ENCODE measurements at regions of chr5 and their contacts with region 1.

Region 1: GRCh38 chr5:36252722-36253365 is 11.1 kb upstream of the NADK2 start:
- DNase-seq: no peak
- H3K4me3 ChIP-seq: no peak overlapping the region
- H3K27ac ChIP-seq: no peak overlapping the region
- H3K4me1 ChIP-seq: no peaks in the 10 kb centered on the region
- H3K27me3 ChIP-seq: peaks cover 0 to 1% (median 0%) of the 10 kb centered on the region in 4 experiments; a peak in 1 of 7 replicates
- CTCF ChIP-seq: no peak
- EP300 ChIP-seq: no peak
- POLR2A ChIP-seq: no peak
- RAD21 ChIP-seq: no peak

Region 2: DNA sequence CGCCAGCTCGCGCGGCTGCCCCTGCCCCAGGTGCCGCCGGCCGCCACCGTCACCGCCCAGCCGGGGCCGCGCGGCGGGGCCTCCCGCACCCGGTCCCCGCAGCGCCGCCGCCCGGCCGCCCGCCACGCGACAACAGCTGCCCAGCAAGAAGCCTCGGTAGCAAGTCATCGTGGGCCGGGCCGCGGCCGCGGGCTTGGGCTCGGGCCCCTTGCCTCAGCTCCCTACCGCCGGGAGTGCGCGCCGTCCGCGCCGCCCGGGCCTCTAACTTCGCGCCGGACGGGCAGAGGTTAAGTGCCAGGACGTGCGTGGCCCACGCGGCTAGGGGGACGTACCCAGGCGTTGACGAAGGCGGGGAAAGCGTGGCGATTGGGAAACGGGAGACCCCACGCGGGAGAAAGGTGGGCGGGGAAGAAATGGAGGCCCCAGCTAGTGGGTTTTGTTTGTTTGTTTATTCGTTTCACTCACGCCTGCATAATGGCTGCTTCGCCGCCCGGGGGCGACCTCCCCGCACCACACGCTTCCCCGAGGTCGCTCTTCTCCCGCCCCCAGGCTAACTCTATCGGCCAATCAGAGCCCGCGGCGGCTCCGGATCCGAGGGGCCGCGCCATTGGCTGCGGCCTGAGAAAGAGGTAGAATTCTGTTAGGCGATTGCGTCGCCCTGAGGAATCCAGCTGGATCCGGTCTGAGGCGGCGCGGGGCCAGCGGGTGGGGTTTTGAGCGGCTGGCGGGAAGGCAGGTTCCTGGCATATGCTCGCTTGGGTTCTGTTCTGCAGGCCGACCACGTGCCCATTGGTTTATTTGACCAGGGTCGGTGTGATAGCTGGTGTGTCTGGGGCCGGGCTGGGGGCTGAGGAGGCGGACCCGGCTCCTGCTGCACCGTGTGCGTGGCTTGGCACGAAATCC is 11.0 kb before region 1 on chr5 and contains the start of gene NADK2:
- CTCF ChIA-PET with region 1: interaction called, 16 read pairs
- POLR2A ChIA-PET with region 1: interaction called, 5 read pairs
- DNase-seq: peak; percentile 91 to 92
- H3K4me3 ChIP-seq: peak within 1 kb of the TSS; percentile 65 to 91 (median 76)
- H3K27ac ChIP-seq: peak within 1 kb of the TSS; percentile 89; the same call in 1 of the 2 replicates
- H3K4me1 ChIP-seq: peaks cover 3 to 4% (median 3%) of the 10 kb centered on the region in 4 experiments; a peak in 5 of 7 replicates
- H3K27me3 ChIP-seq: peaks cover 1 to 12% (median 6%) of the 10 kb centered on the region in 4 experiments
- CTCF ChIP-seq: peak; percentile 54 to 72 (median 63)
- EP300 ChIP-seq: peak in 1 of 2 experiments; percentile 65; a peak in 1 of 3 replicates
- POLR2A ChIP-seq: peak; percentile 42 to 79
- RAD21 ChIP-seq: peak; percentile 47 to 60
- total RNA-seq, gene NADK2: 16.1 and 16.4 TPM in 2 replicates

Region 3: DNA sequence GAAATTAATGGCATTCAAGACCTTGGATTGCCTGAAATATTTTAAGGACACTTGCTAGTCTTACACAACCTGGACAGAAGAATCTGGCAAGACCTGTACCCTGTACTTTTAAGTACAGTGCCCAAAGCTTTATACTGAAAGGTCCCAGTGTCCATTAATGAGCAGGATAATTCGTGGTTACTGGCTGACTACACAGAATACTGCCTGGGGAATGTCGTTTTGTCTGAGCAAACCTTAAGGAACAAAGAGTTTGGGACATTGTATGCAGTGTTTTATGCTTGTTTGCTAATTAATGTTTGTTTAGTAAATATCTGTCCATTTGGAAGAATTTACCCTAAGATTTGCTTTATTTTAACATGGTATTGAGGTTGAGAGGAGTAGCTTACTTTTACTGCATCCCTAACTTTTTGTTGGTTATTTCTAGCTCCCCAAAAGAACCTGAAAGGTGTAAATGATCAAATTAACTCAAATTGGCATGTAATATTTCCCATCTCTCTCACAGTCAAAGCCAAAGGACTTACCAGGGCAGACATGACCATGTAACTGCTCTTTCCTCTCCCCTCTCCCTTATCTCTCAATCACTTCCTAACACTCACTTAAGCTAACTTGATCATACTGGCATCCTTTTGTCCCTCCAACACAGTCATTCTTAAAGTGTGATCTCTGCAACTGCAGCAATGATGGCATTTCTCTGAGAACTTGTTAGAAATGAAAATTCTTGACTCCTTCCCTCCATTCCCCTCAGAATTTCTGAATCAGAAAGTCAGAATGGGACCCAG is 33.2 kb after region 1 on chr5:
- CTCF ChIA-PET with region 1: no interaction called
- POLR2A ChIA-PET with region 1: no interaction called
- DNase-seq: no peak
- H3K4me3 ChIP-seq: no peak overlapping the region
- H3K27ac ChIP-seq: no peak overlapping the region
- H3K4me1 ChIP-seq: no peaks in the 10 kb centered on the region
- H3K27me3 ChIP-seq: no peaks in the 10 kb centered on the region
- CTCF ChIP-seq: no peak
- EP300 ChIP-seq: no peak
- POLR2A ChIP-seq: no peak
- RAD21 ChIP-seq: no peak